Transverse colon (tissue), 4 donors: ENCODE measurements at regions of chr2 and their contacts with region 1.

Region 1: GRCh38 chr2:151111599-151112278 is 149.9 kb downstream of the RBM43 start:
- DNase-seq: no peak
- H3K4me3 ChIP-seq: no peak overlapping the region
- H3K27ac ChIP-seq: no peak overlapping the region
- H3K4me1 ChIP-seq: no peaks in the 10 kb centered on the region
- H3K27me3 ChIP-seq: no peaks in the 10 kb centered on the region
- CTCF ChIP-seq: no peak
- EP300 ChIP-seq: no peak
- POLR2A ChIP-seq: no peak

Region 2: GRCh38 chr2:149152339-149152974 is 1959.3 kb before region 1 on chr2:
- in situ Hi-C with region 1: no loop called
- intact Hi-C with region 1: loop called (anchors 10 kb)
- DNase-seq: no peak
- H3K4me3 ChIP-seq: no peak overlapping the region
- H3K27ac ChIP-seq: no peak overlapping the region
- H3K4me1 ChIP-seq: no peaks in the 10 kb centered on the region
- H3K27me3 ChIP-seq: no peaks in the 10 kb centered on the region
- CTCF ChIP-seq: no peak
- EP300 ChIP-seq: no peak
- POLR2A ChIP-seq: no peak

Region 3: GRCh38 chr2:150674283-150674682 is 437.5 kb before region 1 on chr2:
- in situ Hi-C with region 1: no loop called
- intact Hi-C with region 1: no loop called
- DNase-seq: no peak
- H3K4me3 ChIP-seq: no peak overlapping the region
- H3K27ac ChIP-seq: no peak overlapping the region
- H3K4me1 ChIP-seq: no peaks in the 10 kb centered on the region
- H3K27me3 ChIP-seq: no peaks in the 10 kb centered on the region
- CTCF ChIP-seq: no peak
- EP300 ChIP-seq: no peak
- POLR2A ChIP-seq: no peak